Astrocyte of the cerebellum (primary cell): ENCODE measurements at regions of chr16 and their contacts with region 1.

Region 1: GRCh38 chr16:84692451-84693214 is 7.2 kb upstream of the USP10 start:
- DNase-seq: no peak
- H3K4me3 ChIP-seq: no peak overlapping the region
- CTCF ChIP-seq: no peak

Region 2: DNA sequence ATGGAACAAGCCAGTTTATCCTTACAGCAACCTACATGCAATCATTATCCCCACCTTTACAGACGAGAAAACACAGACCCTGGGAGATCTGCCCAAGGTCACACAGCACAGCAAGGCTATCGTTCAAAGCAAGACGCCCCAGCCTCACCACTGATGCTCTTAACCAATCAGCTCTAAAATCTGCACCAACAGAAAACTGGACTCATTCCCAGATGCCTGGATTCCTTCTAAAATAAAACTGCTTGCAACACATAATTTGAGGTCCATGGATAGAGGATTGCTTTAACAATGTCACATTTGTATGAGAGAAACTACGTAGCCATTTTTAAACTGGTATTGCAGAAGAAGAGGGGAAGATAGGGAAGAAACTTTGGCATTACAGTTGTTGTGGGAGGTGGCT is 81.6 kb before region 1 on chr16:
- in situ Hi-C with region 1: loop called (anchors 5 kb)
- DNase-seq: no peak
- H3K4me3 ChIP-seq: no peak overlapping the region
- CTCF ChIP-seq: no peak

Region 3: GRCh38 chr16:84730406-84731037 is 37.9 kb after region 1 on chr16:
- in situ Hi-C with region 1: loop called (anchors 5 kb)
- DNase-seq: peak; percentile 91
- H3K4me3 ChIP-seq: no peak overlapping the region
- CTCF ChIP-seq: no peak

Region 4: GRCh38 chr16:85137323-85138072 is 444.9 kb after region 1 on chr16:
- in situ Hi-C with region 1: no loop called
- DNase-seq: peak; percentile 54
- H3K4me3 ChIP-seq: no peak overlapping the region
- CTCF ChIP-seq: no peak